ENCODE measurements at regions of chr20 and their contacts with region 1.

Region 1: DNA sequence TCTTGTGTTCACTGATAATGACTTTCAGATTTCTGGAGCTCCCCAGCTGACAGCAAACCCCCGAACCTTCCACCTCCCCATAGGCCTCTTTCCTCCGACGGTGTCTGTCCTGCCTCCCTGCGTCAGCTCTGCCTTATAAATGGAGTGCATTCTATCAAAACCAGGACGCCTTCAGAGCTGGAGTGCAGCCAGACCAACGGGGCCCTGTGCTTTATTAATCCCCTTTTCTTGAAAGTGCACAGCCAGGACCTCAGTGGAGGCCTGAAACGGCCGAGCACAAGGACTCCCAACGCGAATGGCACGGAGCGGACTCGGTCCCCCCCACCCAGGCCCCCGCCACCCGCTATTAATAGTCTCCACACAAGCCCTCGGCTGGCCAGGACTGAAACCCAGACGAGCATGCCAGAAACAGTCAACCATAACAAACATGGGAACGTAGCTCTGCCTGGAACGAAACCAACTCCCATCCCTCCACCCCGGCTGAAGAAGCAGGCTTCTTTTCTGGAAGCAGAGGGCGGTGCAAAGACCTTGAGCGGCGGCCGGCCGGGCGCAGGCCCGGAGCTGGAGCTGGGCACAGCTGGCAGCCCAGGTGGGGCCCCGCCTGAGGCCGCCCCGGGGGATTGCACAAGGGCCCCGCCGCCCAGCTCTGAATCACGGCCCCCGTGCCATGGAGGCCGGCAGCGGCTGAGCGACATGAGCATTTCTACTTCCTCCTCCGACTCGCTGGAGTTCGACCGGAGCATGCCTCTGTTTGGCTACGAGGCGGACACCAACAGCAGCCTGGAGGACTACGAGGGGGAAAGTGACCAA is 42.3 kb upstream of the NAA20 start:
- DNase-seq: peak; percentile 60 to 75
- H3K4me3 ChIP-seq: peak overlapping the region; percentile 51
- H3K4me3 Mint-ChIP-seq: peak overlapping the region; percentile 81
- H3K27ac Mint-ChIP-seq: peak overlapping the region; percentile 89
- H3K4me1 ChIP-seq: peaks cover 41% of the 10 kb centered on the region
- H3K4me1 Mint-ChIP-seq: peaks cover 41% of the 10 kb centered on the region
- H3K27me3 ChIP-seq: no peaks in the 10 kb centered on the region
- H3K27me3 Mint-ChIP-seq: no peaks in the 10 kb centered on the region
- CTCF ChIP-seq: no peak

Region 2: GRCh38 chr20:19889011-19889953 is 85.5 kb before region 1 on chr20:
- CTCF ChIA-PET with region 1: interaction called, 4 read pairs
- POLR2A ChIA-PET with region 1: no interaction called
- intact Hi-C with region 1: loop called (anchors 2 kb)
- DNase-seq: no peak
- H3K4me3 ChIP-seq: no peak overlapping the region
- H3K4me3 Mint-ChIP-seq: no peak overlapping the region
- H3K27ac Mint-ChIP-seq: peak overlapping the region; percentile 40
- H3K4me1 ChIP-seq: peaks cover 47% of the 10 kb centered on the region
- H3K4me1 Mint-ChIP-seq: peaks cover 36% of the 10 kb centered on the region
- H3K27me3 ChIP-seq: no peaks in the 10 kb centered on the region
- H3K27me3 Mint-ChIP-seq: no peaks in the 10 kb centered on the region
- CTCF ChIP-seq: no peak

Region 3: GRCh38 chr20:19897891-19898290 is 76.9 kb before region 1 on chr20:
- CTCF ChIA-PET with region 1: no interaction called
- POLR2A ChIA-PET with region 1: no interaction called
- intact Hi-C with region 1: loop called (anchors 2 kb)
- DNase-seq: no peak
- H3K4me3 ChIP-seq: no peak overlapping the region
- H3K4me3 Mint-ChIP-seq: no peak overlapping the region
- H3K27ac Mint-ChIP-seq: peak overlapping the region; percentile 51
- H3K4me1 ChIP-seq: peaks cover 23% of the 10 kb centered on the region
- H3K4me1 Mint-ChIP-seq: peaks cover 25% of the 10 kb centered on the region
- H3K27me3 ChIP-seq: no peaks in the 10 kb centered on the region
- H3K27me3 Mint-ChIP-seq: no peaks in the 10 kb centered on the region
- CTCF ChIP-seq: no peak

Region 4: GRCh38 chr20:19915111-19915798 is 59.6 kb before region 1 on chr20:
- CTCF ChIA-PET with region 1: interaction called, 5 read pairs
- POLR2A ChIA-PET with region 1: interaction called, 10 read pairs
- intact Hi-C with region 1: no loop called
- DNase-seq: no peak
- H3K4me3 ChIP-seq: no peak overlapping the region
- H3K4me3 Mint-ChIP-seq: no peak overlapping the region
- H3K27ac Mint-ChIP-seq: peak overlapping the region; percentile 77
- H3K4me1 ChIP-seq: peaks cover 40% of the 10 kb centered on the region
- H3K4me1 Mint-ChIP-seq: peaks cover 51% of the 10 kb centered on the region
- H3K27me3 ChIP-seq: no peaks in the 10 kb centered on the region
- H3K27me3 Mint-ChIP-seq: no peaks in the 10 kb centered on the region
- CTCF ChIP-seq: no peak

Region 5: GRCh38 chr20:19964289-19965263 is 10.3 kb before region 1 on chr20:
- CTCF ChIA-PET with region 1: no interaction called
- POLR2A ChIA-PET with region 1: interaction called, 4 read pairs
- intact Hi-C with region 1: loop called (anchors 1 kb)
- DNase-seq: peak; percentile 82 to 88
- H3K4me3 ChIP-seq: no peak overlapping the region
- H3K4me3 Mint-ChIP-seq: peak overlapping the region; percentile 57
- H3K27ac Mint-ChIP-seq: peak overlapping the region; percentile 88
- H3K4me1 ChIP-seq: peaks cover 37% of the 10 kb centered on the region
- H3K4me1 Mint-ChIP-seq: peaks cover 32% of the 10 kb centered on the region
- H3K27me3 ChIP-seq: no peaks in the 10 kb centered on the region
- H3K27me3 Mint-ChIP-seq: no peaks in the 10 kb centered on the region
- CTCF ChIP-seq: no peak

Region 6: GRCh38 chr20:19995220-19995863 is 20.5 kb after region 1 on chr20:
- CTCF ChIA-PET with region 1: interaction called, 13 read pairs
- POLR2A ChIA-PET with region 1: interaction called, 16 read pairs
- intact Hi-C with region 1: loop called (anchors 1 kb)
- DNase-seq: peak in 1 of 2 experiments; percentile 37
- H3K4me3 ChIP-seq: no peak overlapping the region
- H3K4me3 Mint-ChIP-seq: no peak overlapping the region
- H3K27ac Mint-ChIP-seq: peak overlapping the region; percentile 81
- H3K4me1 ChIP-seq: peaks cover 44% of the 10 kb centered on the region
- H3K4me1 Mint-ChIP-seq: peaks cover 32% of the 10 kb centered on the region
- H3K27me3 ChIP-seq: no peaks in the 10 kb centered on the region
- H3K27me3 Mint-ChIP-seq: no peaks in the 10 kb centered on the region
- CTCF ChIP-seq: peak; percentile 79 to 86

Region 7: GRCh38 chr20:20005342-20005741 is 30.5 kb after region 1 on chr20:
- CTCF ChIA-PET with region 1: no interaction called
- POLR2A ChIA-PET with region 1: no interaction called
- intact Hi-C with region 1: no loop called
- DNase-seq: no peak
- H3K4me3 ChIP-seq: no peak overlapping the region
- H3K4me3 Mint-ChIP-seq: no peak overlapping the region
- H3K27ac Mint-ChIP-seq: no peak overlapping the region
- H3K4me1 ChIP-seq: peaks cover 4% of the 10 kb centered on the region; the same call in 1 of the 2 replicates
- H3K4me1 Mint-ChIP-seq: peaks cover 7% of the 10 kb centered on the region
- H3K27me3 ChIP-seq: no peaks in the 10 kb centered on the region
- H3K27me3 Mint-ChIP-seq: no peaks in the 10 kb centered on the region
- CTCF ChIP-seq: no peak

Region 8: DNA sequence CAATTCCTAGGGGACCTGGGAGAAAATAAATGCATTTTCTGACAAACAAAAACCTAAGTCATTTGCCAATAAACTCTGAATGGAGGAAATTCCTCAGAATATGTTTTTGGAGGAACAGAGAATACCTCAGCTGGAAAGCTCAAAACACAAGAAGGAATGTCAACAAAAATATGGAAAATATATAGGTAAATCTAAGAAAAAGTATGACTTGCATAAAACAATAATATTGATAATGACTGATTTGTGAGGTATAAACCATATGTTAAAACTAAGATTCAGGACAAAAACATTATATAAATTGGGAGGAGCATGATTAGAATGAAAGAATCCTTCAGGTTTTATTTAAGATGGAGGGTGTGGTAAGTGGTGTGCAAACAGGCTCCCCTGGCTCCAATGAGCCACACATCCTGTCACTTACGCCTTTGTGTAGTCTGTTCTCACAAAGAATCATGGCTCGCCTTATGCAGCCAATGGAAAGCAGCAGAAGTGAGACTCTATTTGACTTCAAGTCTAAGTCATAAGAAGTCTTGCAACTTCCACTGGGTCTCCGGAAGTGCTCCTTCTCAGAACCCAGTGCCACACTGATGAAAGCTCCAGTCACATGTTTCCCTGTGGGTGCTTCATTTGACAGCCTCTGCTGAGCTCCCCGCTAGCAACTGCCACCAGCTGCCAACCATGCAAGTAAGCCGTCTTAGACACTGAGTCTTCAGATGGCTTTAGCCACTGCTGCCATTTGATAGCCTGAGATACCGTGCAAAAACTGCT is 85.6 kb after region 1 on chr20:
- CTCF ChIA-PET with region 1: no interaction called
- POLR2A ChIA-PET with region 1: no interaction called
- intact Hi-C with region 1: no loop called
- DNase-seq: no peak
- H3K4me3 ChIP-seq: no peak overlapping the region
- H3K4me3 Mint-ChIP-seq: no peak overlapping the region
- H3K27ac Mint-ChIP-seq: no peak overlapping the region
- H3K4me1 ChIP-seq: no peaks in the 10 kb centered on the region
- H3K4me1 Mint-ChIP-seq: no peaks in the 10 kb centered on the region
- H3K27me3 ChIP-seq: no peaks in the 10 kb centered on the region
- H3K27me3 Mint-ChIP-seq: peaks cover 8% of the 10 kb centered on the region
- CTCF ChIP-seq: no peak

Region 9: GRCh38 chr20:20096421-20096820 is 121.6 kb after region 1 on chr20:
- CTCF ChIA-PET with region 1: no interaction called
- POLR2A ChIA-PET with region 1: no interaction called
- intact Hi-C with region 1: no loop called
- DNase-seq: no peak
- H3K4me3 ChIP-seq: no peak overlapping the region
- H3K4me3 Mint-ChIP-seq: no peak overlapping the region
- H3K27ac Mint-ChIP-seq: no peak overlapping the region
- H3K4me1 ChIP-seq: no peaks in the 10 kb centered on the region
- H3K4me1 Mint-ChIP-seq: no peaks in the 10 kb centered on the region
- H3K27me3 ChIP-seq: no peaks in the 10 kb centered on the region
- H3K27me3 Mint-ChIP-seq: peaks cover 10% of the 10 kb centered on the region
- CTCF ChIP-seq: no peak

Region 10: DNA sequence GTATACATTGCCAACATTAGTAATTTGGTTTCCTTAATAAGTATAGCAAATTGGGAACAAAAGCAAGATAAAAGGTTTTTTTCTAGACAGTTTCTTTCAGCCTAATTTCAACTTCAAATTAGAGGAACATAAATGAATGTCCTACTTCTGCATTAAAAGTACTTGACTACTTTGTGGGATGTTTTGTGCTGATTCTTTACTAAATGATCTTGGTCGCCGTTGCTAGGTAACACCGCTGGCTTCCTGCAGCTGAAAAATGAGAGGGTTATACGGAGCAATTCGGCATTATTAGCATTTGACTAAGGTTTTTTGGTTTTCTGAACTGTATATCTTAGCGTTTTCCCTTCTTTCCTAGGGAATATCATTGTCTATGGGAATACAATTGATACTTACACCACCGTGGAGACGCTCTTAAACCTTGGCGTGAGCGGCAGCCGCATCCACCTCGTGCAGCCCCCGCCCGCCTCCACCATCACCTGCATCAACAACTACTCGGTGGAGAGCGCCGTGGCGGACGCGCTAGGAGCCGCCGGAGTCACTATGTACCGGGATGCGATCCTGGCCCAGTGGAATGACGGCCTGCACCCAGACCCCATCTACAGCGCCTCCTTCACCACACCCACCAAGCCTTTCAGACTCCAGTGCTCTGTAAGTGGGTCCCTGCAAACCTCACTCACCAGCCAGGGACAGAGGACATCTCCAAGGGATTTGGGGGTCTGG is 302.1 kb after region 1 on chr20:
- CTCF ChIA-PET with region 1: no interaction called
- POLR2A ChIA-PET with region 1: no interaction called
- intact Hi-C with region 1: no loop called
- DNase-seq: no peak
- H3K4me3 ChIP-seq: no peak overlapping the region
- H3K4me3 Mint-ChIP-seq: no peak overlapping the region
- H3K27ac Mint-ChIP-seq: no peak overlapping the region
- H3K4me1 ChIP-seq: no peaks in the 10 kb centered on the region
- H3K4me1 Mint-ChIP-seq: no peaks in the 10 kb centered on the region
- H3K27me3 ChIP-seq: no peaks in the 10 kb centered on the region; the same call in 1 of the 2 replicates
- H3K27me3 Mint-ChIP-seq: peaks cover 4% of the 10 kb centered on the region
- CTCF ChIP-seq: no peak

Measured in Caco-2 (cell line).